H1 (cell line): ENCODE measurements at regions of chr17 and their contacts with region 1.

Region 1: DNA sequence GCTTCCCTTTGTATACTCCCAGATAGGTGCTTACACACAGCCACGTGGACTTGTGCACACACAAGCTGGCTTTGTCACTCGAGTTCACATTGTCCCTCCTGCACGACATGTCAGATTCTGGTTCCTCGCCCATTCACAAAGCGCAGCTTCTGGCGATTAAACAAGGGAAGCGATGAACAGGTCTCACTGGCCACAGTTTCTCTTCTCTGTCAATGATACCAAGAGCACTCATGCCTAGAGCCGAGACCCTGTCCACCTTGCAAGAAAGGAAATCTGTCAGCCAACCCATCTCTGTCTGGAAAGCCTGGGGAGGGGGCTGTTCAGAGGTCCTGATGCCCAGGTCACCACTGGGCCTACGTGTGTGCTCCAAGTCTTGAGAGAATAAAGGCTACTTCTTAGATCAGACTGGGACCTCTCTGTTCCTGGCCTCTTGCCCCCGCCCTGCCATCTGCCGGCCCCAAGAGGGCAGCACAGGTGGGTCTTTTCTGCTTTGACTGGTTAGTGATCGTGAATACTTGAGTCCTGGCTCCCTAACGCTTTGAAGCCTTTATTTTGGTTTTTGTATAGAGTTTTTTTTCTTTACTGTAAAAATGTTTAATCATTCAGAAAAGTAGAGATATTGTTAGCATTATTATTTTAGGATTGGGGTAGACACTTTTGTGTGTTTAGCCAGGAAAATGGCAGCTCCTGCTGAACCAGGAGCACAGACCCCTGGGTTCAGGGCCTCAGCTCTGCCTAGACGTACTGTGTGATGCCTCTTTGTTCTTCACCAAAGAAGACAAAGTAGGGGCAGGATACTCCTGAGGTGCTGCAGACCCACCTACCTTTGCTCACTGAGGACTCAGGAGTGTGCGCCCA is 104.7 kb downstream of the MRM1 start:
- DNase-seq: no peak
- H3K4me3 ChIP-seq: no peak overlapping the region
- H3K27ac ChIP-seq: no peak overlapping the region
- H3K4me1 ChIP-seq: peaks cover 0 to 8% (median 2%) of the 10 kb centered on the region in 4 experiments; a peak in 2 of 7 replicates
- H3K27me3 ChIP-seq: peaks cover 0 to 15% (median 7%) of the 10 kb centered on the region in 4 experiments; a peak in 6 of 7 replicates
- CTCF ChIP-seq: peak; percentile 81 to 88 (median 82)
- EP300 ChIP-seq: no peak
- POLR2A ChIP-seq: no peak
- RAD21 ChIP-seq: peak; percentile 81 to 88

Region 2: DNA sequence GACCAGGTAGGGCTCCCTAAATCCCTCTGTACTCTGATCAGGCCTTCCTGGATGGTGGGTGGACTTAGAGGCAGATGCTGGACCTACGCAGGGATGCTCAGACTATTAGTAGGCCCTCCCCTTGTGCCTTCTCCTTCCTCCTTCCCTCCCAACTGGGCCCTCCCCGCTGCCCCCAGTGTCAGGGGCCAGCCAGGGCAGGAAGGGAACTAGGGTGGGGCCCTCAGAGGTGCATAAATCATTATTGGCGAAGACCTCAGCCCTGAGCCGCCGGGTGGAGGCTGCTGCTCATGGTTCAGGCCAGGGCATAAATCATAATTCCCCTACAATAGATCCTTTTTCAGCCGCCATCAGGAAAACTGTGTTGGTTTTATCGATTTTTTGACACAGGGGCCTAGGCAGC is 23.3 kb before region 1 on chr17:
- CTCF ChIA-PET with region 1: interaction called, 15 read pairs
- POLR2A ChIA-PET with region 1: interaction called, 3 read pairs
- DNase-seq: no peak
- H3K4me3 ChIP-seq: no peak overlapping the region
- H3K27ac ChIP-seq: no peak overlapping the region
- H3K4me1 ChIP-seq: peaks cover 2 to 24% (median 15%) of the 10 kb centered on the region in 4 experiments
- H3K27me3 ChIP-seq: no peaks in the 10 kb centered on the region
- CTCF ChIP-seq: no peak
- EP300 ChIP-seq: no peak
- POLR2A ChIP-seq: no peak
- RAD21 ChIP-seq: no peak

Region 3: GRCh38 chr17:36717088-36717487 is 11.0 kb after region 1 on chr17:
- CTCF ChIA-PET with region 1: interaction called, 25 read pairs
- POLR2A ChIA-PET with region 1: no interaction called
- DNase-seq: no peak
- H3K4me3 ChIP-seq: no peak overlapping the region
- H3K27ac ChIP-seq: no peak overlapping the region
- H3K4me1 ChIP-seq: peaks cover 3 to 6% (median 6%) of the 10 kb centered on the region in 4 experiments; a peak in 4 of 7 replicates
- H3K27me3 ChIP-seq: no peaks in the 10 kb centered on the region
- CTCF ChIP-seq: no peak
- EP300 ChIP-seq: no peak
- POLR2A ChIP-seq: no peak
- RAD21 ChIP-seq: no peak

Region 4: DNA sequence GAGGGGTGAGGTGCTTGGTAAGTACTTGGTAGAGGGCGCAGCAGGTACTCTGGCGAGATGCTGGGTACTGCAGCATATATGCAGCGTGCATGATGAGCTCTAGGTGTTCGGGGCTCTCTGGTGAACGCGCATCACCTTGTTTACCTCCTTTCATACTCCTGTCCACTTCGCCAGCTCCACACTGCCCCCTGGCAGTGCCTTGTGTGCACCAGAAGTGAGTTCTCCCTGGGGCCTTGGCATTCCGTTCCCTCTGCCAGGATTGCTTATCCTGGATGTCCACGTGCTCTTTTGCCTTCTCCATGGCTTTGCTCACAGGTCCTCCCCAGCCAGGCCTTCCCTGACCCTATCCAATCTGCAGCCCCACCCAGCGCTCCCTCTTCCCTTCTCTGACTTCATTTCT is 49.5 kb after region 1 on chr17:
- CTCF ChIA-PET with region 1: interaction called, 24 read pairs
- POLR2A ChIA-PET with region 1: interaction called, 3 read pairs
- DNase-seq: peak; percentile 41 to 83
- H3K4me3 ChIP-seq: no peak overlapping the region
- H3K27ac ChIP-seq: no peak overlapping the region
- H3K4me1 ChIP-seq: peaks cover 0 to 5% (median 0%) of the 10 kb centered on the region in 4 experiments; a peak in 2 of 7 replicates
- H3K27me3 ChIP-seq: no peaks in the 10 kb centered on the region
- CTCF ChIP-seq: peak; percentile 84 to 91 (median 88)
- EP300 ChIP-seq: no peak
- POLR2A ChIP-seq: no peak
- RAD21 ChIP-seq: peak; percentile 84 to 87